ENCODE measurements at regions of chr17 and their contacts with region 1.

Region 1: GRCh38 chr17:70168977-70169708 is at the start of gene KCNJ2:
- DNase-seq: peak; percentile 93
- H3K4me3 ChIP-seq: peak within 1 kb of the TSS; percentile 85 to 97 (median 95)
- H3K27ac ChIP-seq: peak within 1 kb of the TSS; percentile 87
- H3K4me1 ChIP-seq: peaks cover 58% of the 10 kb centered on the region
- H3K27me3 ChIP-seq: no peaks in the 10 kb centered on the region
- CTCF ChIP-seq: no peak
- POLR2A ChIP-seq: peak; percentile 95
- total RNA-seq, gene KCNJ2: 11.5 and 15.5 TPM in 2 replicates

Region 2: DNA sequence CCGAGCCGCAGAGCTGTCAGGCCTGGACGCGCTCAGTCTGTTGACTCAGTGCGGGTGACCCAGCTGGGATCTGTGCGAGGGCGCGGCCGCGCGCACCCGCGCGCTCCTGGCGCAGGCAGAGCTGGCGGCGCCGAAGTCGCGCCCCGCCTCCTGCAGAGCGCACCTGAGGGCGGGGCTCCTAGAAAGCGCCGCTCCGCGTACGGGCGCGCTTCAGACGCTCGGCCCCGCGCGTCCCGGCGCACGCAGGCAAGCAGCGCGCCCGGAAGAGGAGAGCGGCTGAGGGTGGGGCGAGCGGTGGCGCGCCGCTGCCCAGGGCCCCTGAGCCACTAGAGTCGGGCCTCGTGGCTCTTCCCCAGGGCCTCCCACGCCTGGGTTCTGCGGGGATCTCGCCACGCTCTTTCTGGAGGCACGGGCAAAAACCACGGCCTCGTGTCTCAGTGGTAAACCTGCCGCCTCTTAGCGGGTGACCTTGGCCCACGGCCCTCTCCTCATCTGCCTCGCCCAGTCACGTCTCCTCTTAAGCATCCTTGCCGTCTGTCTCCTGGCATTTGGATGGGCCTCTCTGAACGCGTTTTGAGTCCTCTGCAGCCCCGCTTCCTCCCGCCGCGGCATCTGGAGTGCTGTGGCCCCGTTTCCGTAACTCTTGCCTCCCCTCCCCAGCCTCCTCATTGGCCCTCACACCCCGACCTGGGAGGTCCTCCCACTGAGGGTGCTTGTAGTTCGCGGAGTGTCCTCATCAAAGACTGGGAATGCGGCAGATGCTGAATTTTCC is 841.9 kb before region 1 on chr17 and contains the start of gene ABCA5:
- CTCF ChIA-PET with region 1: no interaction called
- POLR2A ChIA-PET with region 1: no interaction called
- dilution Hi-C with region 1: no loop called
- intact Hi-C with region 1: loop called (anchors 1 kb)
- DNase-seq: peak; percentile 91
- H3K4me3 ChIP-seq: peak within 1 kb of the TSS; percentile 70 to 89 (median 70)
- H3K27ac ChIP-seq: peak within 1 kb of the TSS; percentile 19
- H3K4me1 ChIP-seq: peaks cover 8% of the 10 kb centered on the region
- H3K27me3 ChIP-seq: no peaks in the 10 kb centered on the region
- CTCF ChIP-seq: no peak
- POLR2A ChIP-seq: peak; percentile 87
- total RNA-seq, gene ABCA5: 23.2 and 25.4 TPM in 2 replicates

Region 3: GRCh38 chr17:69672924-69673323 is 496.2 kb before region 1 on chr17:
- CTCF ChIA-PET with region 1: no interaction called
- POLR2A ChIA-PET with region 1: no interaction called
- dilution Hi-C with region 1: no loop called
- intact Hi-C with region 1: loop called (anchors 2 kb)
- DNase-seq: peak; percentile 81
- H3K4me3 ChIP-seq: no peak overlapping the region
- H3K27ac ChIP-seq: peak overlapping the region; percentile 70
- H3K4me1 ChIP-seq: peaks cover 18% of the 10 kb centered on the region
- H3K27me3 ChIP-seq: no peaks in the 10 kb centered on the region
- CTCF ChIP-seq: no peak
- POLR2A ChIP-seq: peak; percentile 65

Region 4: DNA sequence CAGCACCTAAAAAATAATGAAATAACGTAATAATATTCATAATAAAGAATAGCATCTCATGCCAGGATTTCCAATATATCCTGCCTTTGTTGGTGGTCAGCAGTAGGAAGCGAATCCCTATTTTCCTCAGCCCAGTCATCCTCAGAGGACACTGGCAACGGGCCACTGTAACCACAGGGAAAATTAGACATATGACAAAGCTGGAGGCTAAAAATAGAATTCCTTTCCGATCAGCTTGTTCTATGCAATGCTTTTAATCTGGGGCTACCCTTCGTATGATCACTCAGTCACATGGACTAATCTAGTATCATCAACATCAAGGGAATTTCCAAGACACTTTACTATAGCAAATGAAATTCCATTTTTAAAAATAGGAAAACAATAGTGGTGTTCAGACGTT is 341.1 kb before region 1 on chr17:
- CTCF ChIA-PET with region 1: interaction called, 7 read pairs
- POLR2A ChIA-PET with region 1: no interaction called
- dilution Hi-C with region 1: no loop called
- intact Hi-C with region 1: loop called (anchors 1 kb)
- DNase-seq: peak; percentile 97
- H3K4me3 ChIP-seq: peak overlapping the region in 1 of 3 experiments; percentile 12
- H3K27ac ChIP-seq: peak overlapping the region; percentile 89
- H3K4me1 ChIP-seq: peaks cover 20% of the 10 kb centered on the region
- H3K27me3 ChIP-seq: no peaks in the 10 kb centered on the region
- CTCF ChIP-seq: no peak
- POLR2A ChIP-seq: no peak

Region 5: DNA sequence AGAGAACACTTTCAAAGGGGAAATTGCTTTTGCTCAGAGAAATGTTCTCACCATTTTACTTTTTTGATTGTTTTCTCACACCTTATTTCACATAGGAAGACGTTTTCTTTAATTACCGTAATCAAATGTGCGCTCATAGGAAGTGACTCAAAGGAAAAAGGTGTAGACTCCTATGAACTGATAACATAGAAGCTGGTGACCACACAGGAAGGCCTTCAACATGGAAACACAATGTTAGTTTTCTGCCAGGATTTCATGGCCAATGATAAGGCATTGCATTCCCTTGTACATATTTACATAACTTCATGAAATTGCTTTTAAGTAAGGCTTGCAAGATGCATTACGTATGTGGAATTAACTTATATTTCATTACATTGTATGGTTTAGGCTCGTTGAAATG is 135.0 kb before region 1 on chr17:
- CTCF ChIA-PET with region 1: interaction called, 4 read pairs
- POLR2A ChIA-PET with region 1: no interaction called
- dilution Hi-C with region 1: no loop called
- intact Hi-C with region 1: loop called (anchors 1 kb)
- DNase-seq: peak; percentile 98
- H3K4me3 ChIP-seq: no peak overlapping the region
- H3K27ac ChIP-seq: peak overlapping the region; percentile 90
- H3K4me1 ChIP-seq: peaks cover 17% of the 10 kb centered on the region
- H3K27me3 ChIP-seq: no peaks in the 10 kb centered on the region
- CTCF ChIP-seq: no peak
- POLR2A ChIP-seq: peak; percentile 68

Region 6: GRCh38 chr17:70144260-70144846 is 24.8 kb before region 1 on chr17:
- CTCF ChIA-PET with region 1: interaction called, 33 read pairs
- POLR2A ChIA-PET with region 1: interaction called, 4 read pairs
- dilution Hi-C with region 1: no loop called
- intact Hi-C with region 1: loop called (anchors 1 kb)
- DNase-seq: peak; percentile 76
- H3K4me3 ChIP-seq: no peak overlapping the region
- H3K27ac ChIP-seq: no peak overlapping the region
- H3K4me1 ChIP-seq: peaks cover 2% of the 10 kb centered on the region
- H3K27me3 ChIP-seq: no peaks in the 10 kb centered on the region
- CTCF ChIP-seq: peak; percentile 5 to 16
- POLR2A ChIP-seq: no peak

Region 7: GRCh38 chr17:70552230-70552981 is 383.3 kb after region 1 on chr17:
- CTCF ChIA-PET with region 1: interaction called, 39 read pairs
- POLR2A ChIA-PET with region 1: no interaction called
- dilution Hi-C with region 1: no loop called
- intact Hi-C with region 1: loop called (anchors 5 kb)
- DNase-seq: peak; percentile 75
- H3K4me3 ChIP-seq: no peak overlapping the region
- H3K27ac ChIP-seq: no peak overlapping the region
- H3K4me1 ChIP-seq: no peaks in the 10 kb centered on the region
- H3K27me3 ChIP-seq: no peaks in the 10 kb centered on the region
- CTCF ChIP-seq: peak; percentile 12 to 24
- POLR2A ChIP-seq: no peak